Activated naive CD4-positive, alpha-beta T cell treated with anti-CD3 and anti-CD28 coated beads for 36 hours (primary cell): ENCODE measurements at regions of chr7 and their contacts with region 1.

Region 1: GRCh38 chr7:150420987-150421674 is 29.3 kb upstream of the GIMAP8 start:
- DNase-seq: peak; percentile 94
- H3K4me3 Mint-ChIP-seq: peak overlapping the region; percentile 4
- H3K27ac Mint-ChIP-seq: no peak overlapping the region
- H3K4me1 Mint-ChIP-seq: peaks cover 12% of the 10 kb centered on the region
- H3K27me3 Mint-ChIP-seq: peaks cover 2% of the 10 kb centered on the region

Region 2: GRCh38 chr7:150404805-150405583 is 16.1 kb before region 1 on chr7:
- CTCF ChIA-PET with region 1: interaction called, 18 read pairs
- intact Hi-C with region 1: loop called (anchors 1 kb)
- DNase-seq: peak; percentile 76
- H3K4me3 Mint-ChIP-seq: peak overlapping the region; percentile 85
- H3K27ac Mint-ChIP-seq: peak overlapping the region; percentile 83
- H3K4me1 Mint-ChIP-seq: peaks cover 29% of the 10 kb centered on the region
- H3K27me3 Mint-ChIP-seq: no peaks in the 10 kb centered on the region

Region 3: DNA sequence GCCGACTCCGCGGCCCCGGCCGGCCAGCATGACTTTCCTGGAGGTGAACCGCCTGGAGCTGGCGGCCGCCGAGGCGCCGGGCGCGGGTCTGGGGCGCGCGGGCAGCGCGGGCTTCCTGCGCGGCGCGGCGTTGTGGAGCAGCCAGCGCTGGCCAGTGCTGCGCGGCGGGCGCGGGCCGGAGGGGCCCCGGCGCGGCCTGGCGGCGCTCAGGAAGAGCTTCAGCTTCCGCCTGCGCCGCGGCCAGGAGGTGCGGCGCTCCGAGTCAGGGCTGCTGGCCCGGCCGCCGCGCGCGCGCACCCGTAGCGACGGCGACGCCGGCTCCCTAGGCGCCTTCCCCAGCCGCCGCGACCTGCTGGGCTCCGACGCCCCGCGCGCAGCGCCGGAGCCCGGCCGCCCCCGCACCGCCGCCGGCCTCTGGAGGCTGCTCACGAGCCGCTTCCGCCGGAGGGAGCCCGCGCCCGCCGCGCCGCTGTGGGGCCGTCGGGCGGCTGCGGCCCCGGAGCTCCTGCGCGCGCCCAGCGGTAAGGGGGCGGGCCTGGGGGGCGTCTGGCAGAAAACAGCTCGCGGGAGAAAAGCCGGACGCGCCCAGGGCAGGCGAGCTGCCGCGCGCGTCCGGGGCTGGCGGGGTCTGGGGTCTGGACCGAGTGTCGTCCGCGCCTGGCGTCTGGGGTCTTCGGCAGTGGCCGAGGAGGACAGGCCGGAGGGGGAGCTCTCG is 694.1 kb after region 1 on chr7:
- CTCF ChIA-PET with region 1: no interaction called
- intact Hi-C with region 1: no loop called
- DNase-seq: peak; percentile 36
- H3K4me3 Mint-ChIP-seq: peak overlapping the region; percentile 60
- H3K27ac Mint-ChIP-seq: no peak overlapping the region
- H3K4me1 Mint-ChIP-seq: peaks cover 8% of the 10 kb centered on the region
- H3K27me3 Mint-ChIP-seq: peaks cover 11% of the 10 kb centered on the region